A549 (cell line): ENCODE measurements at regions of chr4 and their contacts with region 1.

Region 1: GRCh38 chr4:2220016-2220630 is 21.8 kb downstream of the HAUS3 start:
- DNase-seq: peak; percentile 45 to 56
- ATAC-seq: peak; percentile 93 to 97
- H3K4me3 ChIP-seq: no peak overlapping the region
- H3K27ac ChIP-seq: no peak overlapping the region
- H3K4me1 ChIP-seq: 0 out of 3 replicates have a peak, but pooled peaks cover 3% of the 10 kb centered on the region
- CTCF ChIP-seq: peak; percentile 72
- EP300 ChIP-seq: no peak
- POLR2A ChIP-seq: no peak
- RAD21 ChIP-seq: peak; percentile 80 to 85

Region 2: DNA sequence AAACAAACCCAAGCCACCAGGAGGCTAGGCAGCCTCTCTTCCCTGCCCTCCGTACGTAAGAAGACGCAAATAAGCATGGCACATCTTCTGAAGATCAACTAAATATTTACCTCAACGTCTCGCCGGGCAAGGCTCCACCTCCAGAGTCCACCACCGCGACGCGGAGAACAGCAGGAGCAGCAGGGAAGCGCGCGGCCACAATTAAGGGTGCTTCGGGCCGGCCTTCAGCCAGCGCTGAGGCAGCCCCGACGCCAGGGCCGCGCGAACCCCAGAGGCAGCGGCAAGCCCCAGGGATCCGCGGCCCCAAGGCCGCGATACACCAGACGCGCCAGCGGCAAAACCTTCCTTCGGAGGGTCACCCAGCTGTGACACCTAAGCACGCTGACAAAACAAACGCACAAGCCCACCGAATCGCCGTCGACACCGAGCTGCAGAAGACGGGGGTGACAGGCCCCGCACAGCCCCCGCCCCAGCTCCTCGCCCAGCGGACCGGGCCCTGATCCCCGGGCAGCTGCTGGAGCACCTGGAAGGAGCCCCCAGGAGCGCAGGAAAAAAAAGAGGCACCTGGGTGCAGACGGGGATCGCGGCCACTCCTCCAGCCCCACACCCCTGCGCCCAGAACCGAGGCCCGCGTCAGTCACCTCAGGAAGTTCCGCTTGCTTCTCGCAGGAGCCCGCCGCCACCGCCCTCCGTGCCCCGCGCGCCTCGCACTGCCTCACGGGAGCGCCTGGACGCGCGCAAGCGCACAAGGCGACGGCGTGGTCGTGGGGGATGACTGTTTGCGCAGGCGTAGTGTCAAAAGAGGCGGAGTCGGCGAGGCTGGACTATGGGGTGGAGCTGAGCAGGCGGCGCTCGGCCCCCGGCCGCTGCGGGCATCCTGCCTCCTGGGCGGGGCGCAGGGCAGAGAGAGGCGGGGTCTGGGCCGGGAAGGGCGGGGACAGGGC is 21.6 kb after region 1 on chr4 and contains the starts of genes HAUS3 and POLN:
- CTCF ChIA-PET with region 1: interaction called, 14 read pairs
- POLR2A ChIA-PET with region 1: no interaction called
- DNase-seq: peak; percentile 87 to 96
- ATAC-seq: peak; percentile 92 to 94
- H3K4me3 ChIP-seq: peak within 1 kb of the TSS; percentile 91
- H3K27ac ChIP-seq: peak within 1 kb of the TSS; percentile 76 to 92
- H3K4me1 ChIP-seq: peaks cover 26% of the 10 kb centered on the region; the same call in 2 of the 3 replicates
- CTCF ChIP-seq: no peak
- EP300 ChIP-seq: no peak
- POLR2A ChIP-seq: peak; percentile 72
- RAD21 ChIP-seq: no peak
- polyA plus RNA-seq, gene HAUS3: 5.7 and 10.6 TPM in 2 replicates
- polyA plus RNA-seq, gene POLN: 2.5 and 2.9 TPM in 2 replicates

Region 3: DNA sequence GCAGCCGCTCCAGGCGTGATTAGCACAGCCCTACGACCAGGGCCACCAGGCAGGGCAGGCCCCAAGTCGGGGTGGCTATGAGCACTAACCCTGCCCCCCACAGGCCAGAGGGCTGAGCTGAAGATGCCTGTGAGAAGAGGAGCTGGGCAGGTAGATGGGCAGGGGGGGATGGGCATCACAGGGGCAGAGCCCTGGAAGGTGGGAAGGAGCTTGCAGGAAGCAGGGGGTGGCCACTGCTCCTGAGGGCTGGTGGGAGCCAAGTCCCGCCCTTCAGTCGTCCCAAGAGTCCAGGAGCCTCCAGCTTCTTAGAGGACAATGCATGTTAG is 49.0 kb after region 1 on chr4:
- CTCF ChIA-PET with region 1: no interaction called
- POLR2A ChIA-PET with region 1: no interaction called
- DNase-seq: no peak
- ATAC-seq: no peak; a peak in 1 of 6 replicates
- H3K4me3 ChIP-seq: no peak overlapping the region
- H3K27ac ChIP-seq: no peak overlapping the region
- H3K4me1 ChIP-seq: no peaks in the 10 kb centered on the region
- CTCF ChIP-seq: no peak
- EP300 ChIP-seq: no peak
- POLR2A ChIP-seq: no peak
- RAD21 ChIP-seq: no peak

Region 4: GRCh38 chr4:2441393-2442174 is 221.5 kb after region 1 on chr4:
- CTCF ChIA-PET with region 1: interaction called, 21 read pairs
- POLR2A ChIA-PET with region 1: no interaction called
- DNase-seq: peak; percentile 68 to 86
- ATAC-seq: peak; percentile 74 to 97
- H3K4me3 ChIP-seq: no peak overlapping the region
- H3K27ac ChIP-seq: peak overlapping the region in 1 of 2 experiments; percentile 30; a peak in 1 of 6 replicates
- H3K4me1 ChIP-seq: 0 out of 3 replicates have a peak, but pooled peaks cover 3% of the 10 kb centered on the region
- CTCF ChIP-seq: peak; percentile 54
- EP300 ChIP-seq: no peak
- POLR2A ChIP-seq: no peak
- RAD21 ChIP-seq: peak; percentile 55 to 68

Region 5: GRCh38 chr4:2468445-2469192 is 248.5 kb after region 1 on chr4 and contains the start of gene RNF4:
- CTCF ChIA-PET with region 1: interaction called, 43 read pairs
- POLR2A ChIA-PET with region 1: no interaction called
- DNase-seq: peak; percentile 95 to 96
- ATAC-seq: peak; percentile 92 to 93
- H3K4me3 ChIP-seq: peak within 1 kb of the TSS; percentile 92
- H3K27ac ChIP-seq: peak within 1 kb of the TSS; percentile 92
- H3K4me1 ChIP-seq: peaks cover 7% of the 10 kb centered on the region; the same call in 2 of the 3 replicates
- CTCF ChIP-seq: no peak
- EP300 ChIP-seq: no peak
- POLR2A ChIP-seq: peak; percentile 57
- RAD21 ChIP-seq: no peak
- polyA plus RNA-seq, gene RNF4: 87.3 and 93.5 TPM in 2 replicates

Region 6: DNA sequence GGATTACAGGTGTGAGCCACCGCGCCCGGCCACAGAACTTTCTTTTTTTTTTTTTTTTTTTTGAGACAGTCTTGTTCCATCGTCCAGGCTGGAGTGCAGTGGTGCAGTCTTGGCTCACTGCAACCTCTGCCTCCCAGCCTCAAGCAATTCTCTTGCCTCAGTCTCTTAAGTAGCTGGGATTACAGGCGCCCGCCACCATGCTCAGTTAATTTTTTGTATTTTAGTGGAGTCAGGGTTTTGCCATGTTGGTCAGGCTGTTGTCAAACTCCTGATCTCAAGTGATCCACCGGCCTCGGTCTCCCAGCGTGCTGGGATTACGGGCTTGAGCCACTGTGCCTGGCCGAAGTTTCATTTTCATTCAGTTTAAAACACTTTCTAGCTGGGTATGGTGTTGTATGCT is 332.7 kb after region 1 on chr4:
- CTCF ChIA-PET with region 1: no interaction called
- POLR2A ChIA-PET with region 1: no interaction called
- DNase-seq: no peak
- ATAC-seq: no peak
- H3K4me3 ChIP-seq: no peak overlapping the region
- H3K27ac ChIP-seq: no peak overlapping the region
- H3K4me1 ChIP-seq: no peaks in the 10 kb centered on the region; the same call in 2 of the 3 replicates
- CTCF ChIP-seq: no peak
- EP300 ChIP-seq: no peak
- POLR2A ChIP-seq: no peak
- RAD21 ChIP-seq: no peak